Activated CD8-positive, alpha-beta T cell treated with anti-CD3 and anti-CD28 coated beads for 36 hours (primary cell): ENCODE measurements at regions of chr7 and their contacts with region 1.

Region 1: GRCh38 chr7:107659666-107660065 is 962 bp upstream of the SLC26A4 start:
- DNase-seq: peak; percentile 69
- ATAC-seq: peak; percentile 81
- H3K4me3 Mint-ChIP-seq: peak overlapping the region; percentile 74
- H3K27ac Mint-ChIP-seq: peak overlapping the region; percentile 85
- H3K4me1 Mint-ChIP-seq: peaks cover 40% of the 10 kb centered on the region
- H3K27me3 Mint-ChIP-seq: peaks cover 44% of the 10 kb centered on the region
- CTCF ChIP-seq: no peak

Region 2: DNA sequence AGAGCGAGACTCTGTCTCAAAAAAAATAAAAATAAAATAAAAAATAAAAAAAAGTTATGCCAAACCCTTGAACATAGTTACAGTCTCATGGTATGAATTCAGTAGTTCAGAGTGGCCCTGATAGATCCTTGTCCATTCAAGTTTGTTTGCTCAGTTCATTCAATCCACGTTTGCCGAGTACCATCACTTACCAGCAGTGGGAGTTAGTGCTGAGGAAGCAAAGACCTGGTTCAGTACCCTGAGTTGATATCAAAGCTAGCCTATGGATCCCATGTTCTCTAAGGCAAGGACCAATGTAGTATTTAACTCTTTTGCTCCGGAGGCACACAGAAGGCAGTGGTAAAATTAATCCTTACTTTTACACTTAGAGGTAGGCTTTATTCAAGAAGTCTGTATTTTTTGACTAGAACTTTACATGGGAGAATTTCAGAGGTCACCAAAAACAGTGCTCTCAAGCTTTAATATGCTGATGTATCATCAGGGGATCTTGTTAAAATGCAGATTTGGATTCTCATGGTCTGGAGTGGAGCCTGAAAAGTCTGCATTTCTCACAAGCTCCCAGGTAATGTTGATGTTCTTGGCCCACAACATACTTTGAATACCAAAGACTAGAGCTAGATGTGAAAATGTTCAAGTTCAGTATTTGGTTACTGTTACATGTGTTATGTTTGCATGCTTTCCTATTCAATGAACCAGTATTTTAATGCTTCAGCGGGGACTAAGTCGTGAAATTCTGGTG is 529.0 kb before region 1 on chr7:
- CTCF ChIA-PET with region 1: no interaction called
- POLR2A ChIA-PET with region 1: no interaction called
- intact Hi-C with region 1: no loop called
- DNase-seq: no peak
- ATAC-seq: no peak
- H3K4me3 Mint-ChIP-seq: no peak overlapping the region
- H3K27ac Mint-ChIP-seq: no peak overlapping the region
- H3K4me1 Mint-ChIP-seq: peaks cover 9% of the 10 kb centered on the region
- H3K27me3 Mint-ChIP-seq: no peaks in the 10 kb centered on the region
- CTCF ChIP-seq: no peak

Region 3: GRCh38 chr7:107579885-107580715 is 79.6 kb before region 1 on chr7 and contains the start of gene BCAP29:
- CTCF ChIA-PET with region 1: interaction called, 3 read pairs
- POLR2A ChIA-PET with region 1: no interaction called
- intact Hi-C with region 1: loop called (anchors 2 kb)
- DNase-seq: peak; percentile 73
- ATAC-seq: peak; percentile 98
- H3K4me3 Mint-ChIP-seq: peak within 1 kb of the TSS; percentile 87
- H3K27ac Mint-ChIP-seq: peak within 1 kb of the TSS; percentile 88
- H3K4me1 Mint-ChIP-seq: peaks cover 21% of the 10 kb centered on the region
- H3K27me3 Mint-ChIP-seq: no peaks in the 10 kb centered on the region
- CTCF ChIP-seq: no peak
- total RNA-seq, gene BCAP29: 24.0 to 27.7 TPM

Region 4: GRCh38 chr7:107594961-107595737 is 64.5 kb before region 1 on chr7:
- CTCF ChIA-PET with region 1: no interaction called
- POLR2A ChIA-PET with region 1: no interaction called
- intact Hi-C with region 1: loop called (anchors 2 kb)
- DNase-seq: no peak
- ATAC-seq: no peak
- H3K4me3 Mint-ChIP-seq: no peak overlapping the region
- H3K27ac Mint-ChIP-seq: no peak overlapping the region
- H3K4me1 Mint-ChIP-seq: no peaks in the 10 kb centered on the region
- H3K27me3 Mint-ChIP-seq: no peaks in the 10 kb centered on the region
- CTCF ChIP-seq: no peak